Heart left ventricle (tissue), 16 donors: ENCODE measurements at regions of chrX and their contacts with region 1.

Region 1: GRCh38 chrX:48801280-48802088 is at the start of gene HDAC6:
- DNase-seq: peak; percentile 96 to 98 (median 97)
- ATAC-seq: peak; percentile 94 to 96 (median 96)
- H3K4me3 ChIP-seq: peak within 1 kb of the TSS; percentile 43 to 96 (median 67)
- H3K27ac ChIP-seq: peak within 1 kb of the TSS; percentile 93 to 99 (median 96)
- H3K4me1 ChIP-seq: peaks cover 0 to 12% (median 3%) of the 10 kb centered on the region in 12 donors
- H3K27me3 ChIP-seq: no peaks in the 10 kb centered on the region
- CTCF ChIP-seq: no peak
- POLR2A ChIP-seq: peak in 1 of 2 donors; percentile 48
- total RNA-seq, gene HDAC6: 27.7 to 48.6 (median 36.9) TPM

Region 2: GRCh38 chrX:48648336-48648751 is 153.1 kb before region 1 on chrX:
- intact Hi-C with region 1: loop called in 1 of 10 experiments (anchors 10 kb)
- DNase-seq: peak in 4 of 5 donors; percentile 6 to 51 (median 30)
- ATAC-seq: peak in 3 of 4 donors; percentile 76 to 83 (median 81)
- H3K4me3 ChIP-seq: no peak overlapping the region
- H3K27ac ChIP-seq: peak overlapping the region in 2 of 12 donors; percentile 9 to 45
- H3K4me1 ChIP-seq: peaks cover 0 to 4% (median 0%) of the 10 kb centered on the region in 12 donors
- H3K27me3 ChIP-seq: peaks cover 0 to 12% (median 0%) of the 10 kb centered on the region in 9 donors
- CTCF ChIP-seq: peak in 10 of 12 donors; percentile 27 to 52 (median 38)
- POLR2A ChIP-seq: no peak

Region 3: DNA sequence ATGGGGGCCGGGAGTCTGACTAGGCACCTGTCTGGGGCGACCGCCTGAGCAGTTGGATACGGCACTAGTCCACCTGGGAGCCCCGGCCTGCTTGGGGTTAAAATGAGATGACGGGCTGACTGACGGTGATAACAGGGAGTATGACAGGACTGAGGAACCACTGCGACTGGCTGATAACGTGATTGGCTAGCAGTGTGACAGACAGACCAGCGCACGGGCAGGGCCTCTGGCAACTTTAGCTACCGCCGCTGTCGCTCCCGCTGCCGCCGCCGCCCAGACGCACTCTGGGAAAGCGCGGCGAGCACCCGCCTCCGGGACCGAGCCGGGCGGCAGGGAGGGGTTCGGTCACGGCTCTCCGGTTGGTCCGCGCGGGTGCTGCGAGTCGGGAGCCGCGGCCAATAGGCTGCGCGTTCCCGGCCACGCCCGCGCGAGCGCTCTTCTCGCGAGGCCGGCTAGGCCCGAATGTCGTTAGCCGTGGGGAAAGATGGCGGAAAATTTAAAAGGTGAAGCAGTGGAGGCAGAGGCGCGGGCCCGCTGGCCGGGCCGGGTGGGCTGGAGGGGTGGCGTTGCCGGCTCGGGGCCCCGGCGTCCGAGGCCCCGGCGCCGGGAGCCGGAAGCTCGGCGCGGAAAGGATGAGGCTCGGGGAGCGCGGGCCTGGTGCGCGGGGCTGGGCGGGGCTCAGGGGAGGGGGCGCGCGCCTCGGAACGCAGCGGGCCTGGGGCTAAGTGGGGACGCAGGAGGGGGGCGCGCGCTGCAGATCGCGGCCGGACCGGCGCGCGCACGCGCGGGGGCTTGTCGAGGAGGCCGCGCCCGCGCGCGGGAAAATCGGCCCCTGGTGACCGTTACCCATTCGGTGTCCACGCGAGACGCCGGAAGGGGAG is 104.9 kb before region 1 on chrX and contains the start of gene SUV39H1:
- intact Hi-C with region 1: loop called in 5 of 10 experiments (anchors 1 to 10 kb)
- DNase-seq: peak; percentile 87 to 94 (median 90)
- ATAC-seq: peak; percentile 93 to 99 (median 98)
- H3K4me3 ChIP-seq: peak within 1 kb of the TSS in 11 of 12 donors; percentile 41 to 87 (median 63)
- H3K27ac ChIP-seq: peak within 1 kb of the TSS; percentile 61 to 93 (median 87)
- H3K4me1 ChIP-seq: peaks cover 0 to 16% (median 2%) of the 10 kb centered on the region in 12 donors
- H3K27me3 ChIP-seq: peaks cover 0 to 3% (median 0%) of the 10 kb centered on the region in 9 donors
- CTCF ChIP-seq: no peak
- POLR2A ChIP-seq: peak; percentile 55 to 91
- total RNA-seq, gene SUV39H1: 2.4 to 6.7 (median 3.6) TPM

Region 4: GRCh38 chrX:48891402-48892288 is 90.2 kb after region 1 on chrX:
- intact Hi-C with region 1: loop called in 5 of 10 experiments (anchors 5 to 10 kb)
- DNase-seq: peak; percentile 81 to 91 (median 87)
- ATAC-seq: peak; percentile 90 to 97 (median 94)
- H3K4me3 ChIP-seq: peak overlapping the region; percentile 17 to 82 (median 65)
- H3K27ac ChIP-seq: peak overlapping the region in 11 of 12 donors; percentile 19 to 83 (median 53)
- H3K4me1 ChIP-seq: peaks cover 0 to 12% (median 5%) of the 10 kb centered on the region in 12 donors
- H3K27me3 ChIP-seq: no peaks in the 10 kb centered on the region
- CTCF ChIP-seq: peak; percentile 26 to 70 (median 49)
- POLR2A ChIP-seq: peak in 1 of 2 donors; percentile 40

Region 5: DNA sequence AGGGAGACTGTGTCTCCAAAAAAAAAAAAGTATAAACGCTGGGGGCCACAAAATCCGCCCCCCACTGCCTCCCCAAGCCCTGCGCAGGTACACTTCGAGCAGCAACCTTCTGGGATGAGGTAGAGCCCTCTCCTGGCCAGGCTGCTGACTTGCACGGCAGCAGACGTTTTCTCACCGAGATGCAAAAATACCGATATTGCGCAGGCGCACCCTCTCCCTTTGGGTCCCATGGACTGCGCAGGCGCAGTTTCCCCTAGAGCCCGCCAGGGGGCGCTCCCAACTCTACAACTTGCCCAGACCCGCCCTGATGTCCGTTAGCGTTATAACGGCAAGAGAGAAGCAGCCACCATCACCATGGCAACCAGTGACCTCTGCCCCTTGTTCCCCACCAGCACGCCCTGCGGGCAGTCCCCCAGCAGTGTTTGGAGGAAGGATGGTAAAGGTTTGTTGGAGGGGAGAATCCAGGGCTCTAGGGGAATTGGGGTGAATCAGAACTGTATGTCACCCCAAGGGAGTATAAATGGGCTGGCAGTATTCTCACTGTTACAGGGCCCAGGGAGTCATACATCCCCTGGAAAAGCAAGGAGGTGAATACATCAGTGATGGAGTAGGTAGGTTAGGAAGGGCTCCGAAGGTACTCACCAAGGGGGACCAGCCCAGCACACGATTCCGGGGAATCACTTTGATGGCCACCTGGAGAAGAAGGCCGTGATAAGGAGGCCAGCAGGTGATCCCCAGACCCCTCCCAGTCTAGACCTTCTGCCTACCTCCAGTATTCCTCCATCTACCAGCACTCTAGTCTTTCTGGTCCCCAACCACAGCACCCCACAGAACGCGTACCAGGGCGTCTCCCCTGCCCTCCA is 115.9 kb after region 1 on chrX:
- intact Hi-C with region 1: loop called in 1 of 10 experiments (anchors 10 kb)
- DNase-seq: peak; percentile 85 to 92 (median 86)
- ATAC-seq: peak; percentile 55 to 79 (median 76)
- H3K4me3 ChIP-seq: peak overlapping the region in 7 of 12 donors; percentile 15 to 74 (median 33)
- H3K27ac ChIP-seq: peak overlapping the region in 2 of 12 donors; percentile 52 to 85
- H3K4me1 ChIP-seq: peaks cover 0 to 18% (median 2%) of the 10 kb centered on the region in 12 donors
- H3K27me3 ChIP-seq: no peaks in the 10 kb centered on the region
- CTCF ChIP-seq: peak; percentile 81 to 96 (median 93)
- POLR2A ChIP-seq: no peak

Region 6: GRCh38 chrX:49199906-49200771 is 398.7 kb after region 1 on chrX and contains the start of gene SYP:
- intact Hi-C with region 1: no loop called
- DNase-seq: peak; percentile 88 to 93 (median 90)
- ATAC-seq: peak; percentile 91 to 97 (median 96)
- H3K4me3 ChIP-seq: peak within 1 kb of the TSS in 11 of 12 donors; percentile 3 to 54 (median 46)
- H3K27ac ChIP-seq: peak within 1 kb of the TSS in 10 of 12 donors; percentile 52 to 76 (median 70)
- H3K4me1 ChIP-seq: peaks cover 0 to 11% (median 2%) of the 10 kb centered on the region in 12 donors
- H3K27me3 ChIP-seq: no peaks in the 10 kb centered on the region
- CTCF ChIP-seq: peak in 1 of 12 donors; percentile 8
- POLR2A ChIP-seq: peak in 1 of 2 donors; percentile 78
- total RNA-seq, gene SYP: 0.49 to 2.7 (median 1.1) TPM